HEK293T (cell line): ENCODE measurements at regions of chr22 and their contacts with region 1.

Region 1: GRCh38 chr22:19463496-19464469 is 15.2 kb downstream of the UFD1 start:
- DNase-seq: no peak

Region 2: GRCh38 chr22:19434829-19435580 is 28.8 kb before region 1 on chr22:
- CTCF ChIA-PET with region 1: no interaction called
- POLR2A ChIA-PET with region 1: no interaction called
- DNase-seq: no peak

Region 3: DNA sequence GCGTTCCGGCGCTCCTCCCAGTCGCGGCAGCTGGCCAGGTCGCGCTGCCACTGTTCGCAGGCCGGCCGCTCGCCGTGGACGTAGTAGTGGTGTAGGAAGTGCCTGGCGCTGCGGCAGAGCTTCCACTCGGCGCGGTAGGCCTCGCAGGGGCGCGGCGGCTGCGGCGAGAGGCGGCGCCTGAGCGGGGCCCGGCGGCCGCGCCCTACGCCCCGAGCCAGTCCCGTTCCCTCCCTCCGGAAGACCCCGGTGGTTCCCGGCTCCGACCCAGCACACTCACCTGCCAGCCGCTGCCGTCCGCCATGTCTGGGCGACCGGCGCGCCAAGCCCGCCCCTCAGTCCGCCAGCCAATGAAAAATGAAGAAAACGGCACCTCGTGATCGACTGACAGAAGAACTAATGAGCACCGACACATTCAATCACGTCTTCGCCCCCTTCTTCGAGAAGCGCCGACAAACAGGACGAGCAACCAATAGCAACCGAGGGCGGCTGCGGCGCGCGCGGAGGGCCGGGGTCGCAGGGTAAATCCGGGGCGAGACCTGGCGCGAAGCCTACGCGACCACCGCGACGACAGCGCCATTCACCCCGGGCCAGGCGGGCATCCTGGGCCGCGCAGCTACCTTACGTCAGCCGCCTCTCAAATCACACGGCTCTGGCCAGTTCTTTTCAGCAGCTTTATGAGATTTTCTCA is 16.3 kb before region 1 on chr22 and contains the start of gene C22orf39:
- CTCF ChIA-PET with region 1: no interaction called
- POLR2A ChIA-PET with region 1: interaction called, 11 read pairs
- DNase-seq: peak; percentile 97

Region 4: GRCh38 chr22:19479357-19480172 is 15.8 kb after region 1 on chr22 and contains the start of gene CDC45:
- CTCF ChIA-PET with region 1: interaction called, 5 read pairs
- POLR2A ChIA-PET with region 1: interaction called, 12 read pairs
- DNase-seq: peak; percentile 95

Region 5: DNA sequence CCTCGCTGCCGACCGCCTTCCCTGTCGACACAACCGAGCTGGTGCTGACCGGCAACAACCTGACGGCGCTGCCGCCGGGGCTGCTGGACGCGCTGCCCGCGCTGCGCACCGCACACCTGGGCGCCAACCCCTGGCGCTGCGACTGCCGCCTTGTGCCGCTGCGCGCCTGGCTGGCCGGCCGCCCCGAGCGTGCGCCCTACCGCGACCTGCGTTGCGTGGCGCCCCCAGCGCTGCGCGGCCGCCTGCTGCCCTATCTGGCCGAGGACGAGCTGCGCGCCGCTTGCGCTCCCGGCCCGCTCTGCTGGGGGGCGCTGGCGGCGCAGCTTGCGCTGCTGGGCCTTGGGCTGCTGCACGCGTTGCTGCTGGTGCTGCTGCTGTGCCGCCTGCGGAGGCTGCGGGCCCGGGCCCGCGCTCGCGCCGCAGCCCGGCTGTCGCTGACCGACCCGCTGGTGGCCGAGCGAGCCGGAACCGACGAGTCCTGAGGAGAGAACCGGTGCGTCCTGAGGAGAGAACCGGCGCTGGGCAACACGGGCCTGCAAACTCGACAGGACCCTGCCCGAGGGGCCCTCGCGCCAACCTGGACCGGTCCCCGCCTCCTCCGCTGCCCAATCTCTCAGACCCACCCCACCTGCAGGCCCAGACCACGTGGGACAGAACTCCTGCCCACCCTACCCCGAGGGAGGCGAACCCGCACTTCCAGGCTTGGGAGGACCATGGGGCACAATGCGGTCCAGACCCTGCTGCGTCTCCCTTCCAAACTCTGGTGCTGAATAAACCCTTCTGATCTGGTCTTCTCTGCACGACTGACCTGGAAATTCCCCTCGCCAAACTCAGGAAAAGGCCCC is 260.4 kb after region 1 on chr22:
- CTCF ChIA-PET with region 1: no interaction called
- POLR2A ChIA-PET with region 1: no interaction called
- DNase-seq: peak; percentile 92